Pancreas (tissue), 10 donors: ENCODE measurements at regions of chr2 and their contacts with region 1.

Region 1: GRCh38 chr2:121356058-121356640 is 71.1 kb upstream of the TFCP2L1 start:
- DNase-seq: peak in 2 of 6 donors; percentile 32 to 58
- ATAC-seq: peak; percentile 66 to 86 (median 80)
- H3K4me3 ChIP-seq: no peak overlapping the region
- H3K27ac ChIP-seq: no peak overlapping the region
- H3K4me1 ChIP-seq: peaks cover 0 to 19% (median 0%) of the 10 kb centered on the region in 3 donors
- H3K27me3 ChIP-seq: no peaks in the 10 kb centered on the region
- CTCF ChIP-seq: peak; percentile 26 to 55 (median 47)

Region 2: GRCh38 chr2:121128754-121129659 is 227.1 kb before region 1 on chr2:
- intact Hi-C with region 1: loop called in 1 of 3 experiments (anchors 10 kb)
- DNase-seq: peak in 5 of 6 donors; percentile 30 to 77 (median 64)
- ATAC-seq: peak; percentile 81 to 95 (median 92)
- H3K4me3 ChIP-seq: no peak overlapping the region
- H3K27ac ChIP-seq: no peak overlapping the region
- H3K4me1 ChIP-seq: no peaks in the 10 kb centered on the region
- H3K27me3 ChIP-seq: no peaks in the 10 kb centered on the region
- CTCF ChIP-seq: peak in 3 of 4 donors; percentile 41 to 48 (median 46)

Region 3: GRCh38 chr2:121689356-121689755 is 333.2 kb after region 1 on chr2:
- intact Hi-C with region 1: no loop called
- DNase-seq: peak in 4 of 6 donors; percentile 38 to 49 (median 44)
- ATAC-seq: peak; percentile 91 to 96 (median 94)
- H3K4me3 ChIP-seq: no peak overlapping the region
- H3K27ac ChIP-seq: peak overlapping the region in 1 of 4 donors; percentile 42
- H3K4me1 ChIP-seq: peaks cover 0 to 5% (median 0%) of the 10 kb centered on the region in 3 donors
- H3K27me3 ChIP-seq: no peaks in the 10 kb centered on the region
- CTCF ChIP-seq: peak in 2 of 4 donors; percentile 21 to 22